Heart left ventricle (tissue), 16 donors: ENCODE measurements at regions of chr13 and their contacts with region 1.

Region 1: GRCh38 chr13:67224148-67224846 is 5.8 kb downstream of the PCDH9 start:
- DNase-seq: peak; percentile 74 to 84 (median 77)
- ATAC-seq: peak; percentile 77 to 88 (median 87)
- H3K4me3 ChIP-seq: peak overlapping the region in 10 of 12 donors; percentile 7 to 80 (median 44)
- H3K27ac ChIP-seq: peak overlapping the region in 5 of 12 donors; percentile 25 to 52 (median 42)
- H3K4me1 ChIP-seq: peaks cover 0 to 49% (median 8%) of the 10 kb centered on the region in 12 donors
- H3K27me3 ChIP-seq: peaks cover 0 to 9% (median 0%) of the 10 kb centered on the region in 9 donors
- CTCF ChIP-seq: peak; percentile 51 to 88 (median 71)
- POLR2A ChIP-seq: no peak

Region 2: DNA sequence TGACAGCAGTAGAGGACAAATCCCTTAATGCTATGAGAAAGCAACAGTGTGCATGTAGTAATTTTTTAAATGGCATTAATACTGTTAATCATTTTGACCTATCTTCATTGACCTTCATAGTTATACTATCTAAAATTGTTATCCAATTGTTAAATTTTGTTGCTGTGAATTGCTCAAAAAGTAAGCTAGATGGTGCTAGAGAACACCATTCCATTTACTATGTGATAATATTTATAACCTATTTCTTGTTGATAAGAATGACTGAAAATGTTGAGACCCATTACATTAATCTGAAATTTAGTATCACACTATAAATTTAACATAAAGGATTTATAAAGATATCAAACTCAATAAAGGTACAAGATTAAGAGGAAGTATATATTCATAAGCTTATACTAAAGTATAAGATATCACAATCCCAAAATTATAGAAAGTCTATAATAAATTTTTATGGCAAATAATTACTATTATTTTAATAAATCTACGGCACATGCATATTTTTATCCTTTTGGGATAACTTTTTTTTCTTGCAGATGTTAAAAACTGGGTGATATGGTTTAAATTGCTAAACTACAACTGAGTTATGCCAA is 1567.5 kb before region 1 on chr13:
- intact Hi-C with region 1: loop called in 3 of 10 experiments (anchors 5 to 10 kb)
- DNase-seq: no peak
- ATAC-seq: no peak
- H3K4me3 ChIP-seq: no peak overlapping the region
- H3K27ac ChIP-seq: no peak overlapping the region
- H3K4me1 ChIP-seq: no peaks in the 10 kb centered on the region
- H3K27me3 ChIP-seq: no peaks in the 10 kb centered on the region
- CTCF ChIP-seq: peak; percentile 20 to 67 (median 42)
- POLR2A ChIP-seq: no peak

Region 3: DNA sequence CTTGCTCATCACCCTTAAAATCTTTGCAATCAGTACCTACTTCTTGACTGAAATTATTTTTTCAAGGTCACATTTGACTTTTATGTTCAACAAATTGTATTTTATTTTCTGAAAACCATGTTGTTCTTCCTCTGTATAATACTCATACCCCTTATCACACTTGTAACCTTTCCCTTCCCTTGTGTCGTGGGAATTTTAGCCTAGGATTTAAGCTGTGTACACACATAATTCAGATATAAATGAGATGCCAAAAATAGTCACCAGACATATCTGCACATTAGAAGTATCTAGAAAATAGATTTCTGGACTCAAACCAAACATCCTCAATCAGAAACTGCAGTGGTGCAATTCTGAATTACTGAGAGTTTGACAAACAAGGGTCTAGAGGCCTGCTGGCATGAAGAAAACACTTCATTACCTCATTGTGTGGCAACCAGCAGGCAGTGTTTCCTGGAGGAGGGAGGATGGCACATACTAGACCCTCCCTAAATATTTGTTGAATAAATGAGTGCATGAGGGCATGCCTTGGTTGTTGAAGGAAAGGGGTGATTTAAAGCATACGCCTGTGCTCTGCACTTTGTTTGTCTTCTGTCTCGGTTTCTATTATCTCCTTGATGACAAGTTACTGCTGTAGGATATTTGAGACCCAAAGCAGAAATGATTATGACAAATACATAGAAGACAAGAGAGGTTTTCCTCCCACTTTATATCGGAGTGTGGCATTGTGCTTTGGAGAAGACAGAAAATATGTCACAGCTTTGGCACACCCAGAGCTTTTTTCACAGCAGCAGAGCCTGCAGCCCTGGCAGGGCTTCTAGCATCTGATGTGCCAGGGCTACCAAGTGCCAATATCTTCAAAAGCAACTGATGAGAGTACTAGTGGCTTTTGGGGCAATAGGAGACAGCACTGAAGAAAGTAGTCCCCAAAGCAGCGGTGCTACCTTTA is 875.3 kb before region 1 on chr13:
- intact Hi-C with region 1: loop called in 1 of 10 experiments (anchors 10 kb)
- DNase-seq: peak in 4 of 5 donors; percentile 10 to 35 (median 26)
- ATAC-seq: peak; percentile 78 to 90 (median 88)
- H3K4me3 ChIP-seq: no peak overlapping the region
- H3K27ac ChIP-seq: peak overlapping the region in 1 of 12 donors; percentile 28
- H3K4me1 ChIP-seq: peaks cover 0 to 38% (median 2%) of the 10 kb centered on the region in 12 donors
- H3K27me3 ChIP-seq: no peaks in the 10 kb centered on the region
- CTCF ChIP-seq: no peak
- POLR2A ChIP-seq: no peak

Region 4: GRCh38 chr13:66624302-66624701 is 600.0 kb before region 1 on chr13:
- intact Hi-C with region 1: loop called in 3 of 10 experiments (anchors 5 to 10 kb)
- DNase-seq: no peak
- ATAC-seq: peak; percentile 95 to 98 (median 96)
- H3K4me3 ChIP-seq: no peak overlapping the region
- H3K27ac ChIP-seq: peak overlapping the region in 3 of 12 donors; percentile 0 to 49 (median 47)
- H3K4me1 ChIP-seq: peaks cover 0 to 16% (median 0%) of the 10 kb centered on the region in 12 donors
- H3K27me3 ChIP-seq: no peaks in the 10 kb centered on the region
- CTCF ChIP-seq: peak in 2 of 12 donors; percentile 12 to 16
- POLR2A ChIP-seq: no peak

Region 5: GRCh38 chr13:66835040-66835628 is 389.2 kb before region 1 on chr13:
- intact Hi-C with region 1: loop called in 3 of 10 experiments (anchors 10 kb)
- DNase-seq: peak; percentile 85 to 94 (median 86)
- ATAC-seq: peak; percentile 74 to 93 (median 85)
- H3K4me3 ChIP-seq: peak overlapping the region in 1 of 12 donors; percentile 13
- H3K27ac ChIP-seq: peak overlapping the region in 8 of 12 donors; percentile 18 to 61 (median 36)
- H3K4me1 ChIP-seq: peaks cover 0 to 21% (median 7%) of the 10 kb centered on the region in 12 donors
- H3K27me3 ChIP-seq: no peaks in the 10 kb centered on the region
- CTCF ChIP-seq: peak in 3 of 12 donors; percentile 4 to 20 (median 8)
- POLR2A ChIP-seq: no peak

Region 6: DNA sequence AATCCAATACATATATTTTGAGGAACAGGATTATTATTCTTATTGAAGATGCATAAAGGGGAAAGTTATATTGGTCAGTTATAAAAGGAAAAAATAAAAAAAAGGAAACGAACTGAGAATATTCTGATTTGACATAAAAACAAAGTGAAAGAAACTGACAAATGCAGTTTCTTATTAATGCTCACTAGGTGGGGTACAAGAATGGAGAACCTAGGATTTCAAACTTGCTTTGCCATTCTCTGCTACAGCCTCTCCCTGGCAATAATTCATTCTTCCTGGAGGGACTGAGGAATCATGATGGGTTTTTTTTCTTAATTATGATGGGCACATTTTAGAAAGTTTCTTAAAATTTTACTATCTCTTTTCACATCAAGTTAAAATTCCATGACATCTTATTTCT is 149.1 kb before region 1 on chr13:
- intact Hi-C with region 1: loop called (anchors 2 to 5 kb)
- DNase-seq: no peak
- ATAC-seq: peak; percentile 32 to 79 (median 64)
- H3K4me3 ChIP-seq: peak overlapping the region in 8 of 12 donors; percentile 15 to 53 (median 34)
- H3K27ac ChIP-seq: no peak overlapping the region
- H3K4me1 ChIP-seq: peaks cover 0 to 6% (median 0%) of the 10 kb centered on the region in 12 donors
- H3K27me3 ChIP-seq: no peaks in the 10 kb centered on the region
- CTCF ChIP-seq: peak in 9 of 12 donors; percentile 14 to 59 (median 43)
- POLR2A ChIP-seq: no peak